Left cardiac atrium (tissue), 4 donors: ENCODE measurements at regions of chr6 and their contacts with region 1.

Region 1: DNA sequence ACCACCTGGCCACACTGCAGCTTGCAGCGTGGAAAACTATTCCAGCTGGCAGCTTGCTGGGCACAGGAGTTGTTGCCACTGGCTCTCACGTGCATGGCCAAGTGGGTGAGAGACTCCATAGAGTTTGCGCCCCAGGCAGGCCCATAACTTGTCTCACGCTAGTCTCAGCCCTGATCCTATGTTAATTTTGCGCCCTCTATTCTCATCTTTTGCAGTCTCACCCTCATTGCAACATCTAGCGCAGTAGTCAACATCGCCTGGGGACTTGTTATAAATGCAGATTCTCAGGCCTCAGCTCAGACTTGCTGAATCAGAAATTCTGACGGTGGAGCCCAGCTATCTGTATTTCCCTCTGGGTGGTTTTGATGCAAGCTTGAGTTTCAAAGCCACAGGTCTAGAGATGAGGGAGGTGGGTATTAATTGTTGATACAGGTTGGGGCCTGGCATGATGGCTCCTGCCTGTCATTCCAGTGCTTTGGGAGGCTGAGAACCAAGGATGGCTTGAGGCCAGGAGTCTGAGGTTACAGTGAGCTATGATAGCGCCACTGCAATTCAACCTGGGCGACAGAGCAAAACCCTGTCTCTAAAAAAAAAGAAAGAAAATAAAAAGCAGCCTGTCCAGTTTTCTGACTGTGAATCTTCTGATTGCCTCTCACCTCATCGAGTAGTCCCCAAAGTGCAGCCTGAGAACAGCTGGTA is 184.9 kb upstream of the SASH1 start:
- DNase-seq: no peak
- ATAC-seq: no peak

Region 2: GRCh38 chr6:147666255-147666654 is 491.4 kb before region 1 on chr6:
- intact Hi-C with region 1: loop called in 1 of 2 experiments (anchors 10 kb)
- DNase-seq: no peak
- ATAC-seq: no peak